ENCODE measurements at regions of chr9 and their contacts with region 1.

Region 1: DNA sequence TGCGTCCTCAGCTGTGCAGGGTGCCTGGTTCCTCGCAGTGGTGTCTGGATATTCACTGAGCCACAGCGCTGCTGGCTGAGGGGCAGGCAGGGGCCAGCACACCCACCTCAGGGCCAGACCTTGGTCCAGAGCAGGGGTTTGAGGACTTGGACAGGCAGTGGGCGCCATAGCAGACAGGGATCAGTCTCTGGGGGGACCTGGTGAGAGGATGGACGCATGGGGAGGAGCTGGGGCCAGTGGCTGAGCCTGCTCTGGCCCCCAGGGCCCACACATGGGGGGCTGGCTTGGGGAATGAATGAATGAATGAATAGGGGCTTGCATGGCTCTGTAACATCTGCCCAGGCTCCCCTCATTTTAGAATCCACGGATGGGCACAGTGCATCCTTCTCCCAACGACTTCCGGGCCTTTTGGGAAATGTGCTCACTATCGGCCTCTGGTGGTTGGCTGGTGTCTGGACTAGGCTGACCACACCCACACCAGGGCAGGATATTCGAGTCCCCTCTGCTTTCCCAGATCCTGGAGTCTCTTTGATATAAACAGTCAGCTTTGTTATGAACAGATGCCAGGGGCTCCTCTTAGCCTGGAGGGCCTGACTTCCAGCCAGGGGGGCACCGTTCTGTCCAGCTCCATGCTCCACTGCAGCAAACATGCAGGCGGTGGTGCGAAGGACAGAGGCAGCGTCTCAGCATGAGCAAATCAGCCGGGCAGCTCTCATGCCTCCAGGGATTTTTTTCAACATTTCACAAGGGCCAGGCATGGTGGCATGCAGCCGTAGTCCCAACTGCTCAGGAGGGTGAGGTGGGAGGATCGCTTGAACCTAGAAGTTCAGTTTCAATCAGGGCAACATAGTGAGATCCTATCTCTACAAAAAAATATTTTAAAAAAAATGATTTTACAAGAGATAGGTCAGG is 62.6 kb downstream of the NEK6 start:
- DNase-seq: peak; percentile 29
- H3K4me3 ChIP-seq: no peak overlapping the region
- H3K27ac ChIP-seq: peak overlapping the region; percentile 39
- H3K27me3 ChIP-seq: no peaks in the 10 kb centered on the region
- CTCF ChIP-seq: peak; percentile 94

Region 2: DNA sequence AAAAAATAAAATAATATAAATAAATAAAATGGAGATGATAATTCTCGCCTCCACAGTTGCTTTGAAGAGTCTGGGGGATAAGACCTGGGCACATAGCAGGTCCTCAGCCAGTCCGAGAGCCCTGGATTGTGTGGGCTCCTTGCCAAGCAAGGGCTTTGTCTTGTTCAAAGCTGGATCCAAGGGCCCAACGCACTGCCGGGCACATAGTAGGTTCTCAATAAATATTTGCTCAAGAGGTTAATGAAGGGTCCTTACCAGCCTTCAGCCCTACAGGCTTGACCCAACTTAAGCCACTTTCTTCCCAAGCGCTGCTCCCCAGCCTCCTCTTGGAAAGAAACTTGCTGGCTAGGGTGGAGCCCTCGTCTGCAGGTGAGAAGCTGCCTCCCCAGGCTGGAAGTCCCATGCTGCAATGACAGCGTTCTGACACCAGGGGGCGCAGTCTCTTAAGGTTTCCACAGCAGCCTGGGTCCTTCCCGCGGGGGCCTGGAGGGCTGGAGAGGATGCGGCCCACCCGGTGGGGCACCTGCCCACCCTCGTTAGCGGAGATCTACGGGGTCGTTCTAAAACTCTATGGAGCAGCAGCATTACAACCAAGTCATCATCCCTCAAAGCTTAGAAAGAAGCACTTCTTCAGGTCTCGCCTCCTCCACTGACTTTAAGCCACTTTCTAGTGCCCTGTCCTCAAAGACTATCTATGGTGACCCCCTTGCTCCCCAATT is 193.6 kb before region 1 on chr9:
- CTCF ChIA-PET with region 1: interaction called, 18 read pairs
- POLR2A ChIA-PET with region 1: no interaction called
- DNase-seq: no peak
- H3K4me3 ChIP-seq: no peak overlapping the region
- H3K27ac ChIP-seq: no peak overlapping the region
- H3K27me3 ChIP-seq: peaks cover 14% of the 10 kb centered on the region
- CTCF ChIP-seq: peak; percentile 91